Calu3 (cell line): ENCODE measurements at regions of chr20 and their contacts with region 1.

Region 1: GRCh38 chr20:58017237-58017969 is 211.1 kb downstream of the ANKRD60 start:
- DNase-seq: peak; percentile 99
- H3K4me3 Mint-ChIP-seq: peak overlapping the region; percentile 12
- H3K27ac Mint-ChIP-seq: peak overlapping the region; percentile 94
- H3K4me1 Mint-ChIP-seq: peaks cover 75% of the 10 kb centered on the region
- H3K27me3 Mint-ChIP-seq: no peaks in the 10 kb centered on the region
- CTCF ChIP-seq: no peak

Region 2: GRCh38 chr20:57622579-57623377 is 394.6 kb before region 1 on chr20:
- CTCF ChIA-PET with region 1: interaction called, 4 read pairs
- intact Hi-C with region 1: loop called (anchors 5 kb)
- DNase-seq: peak; percentile 96
- H3K4me3 Mint-ChIP-seq: peak overlapping the region; percentile 11
- H3K27ac Mint-ChIP-seq: peak overlapping the region; percentile 18
- H3K4me1 Mint-ChIP-seq: peaks cover 40% of the 10 kb centered on the region
- H3K27me3 Mint-ChIP-seq: no peaks in the 10 kb centered on the region
- CTCF ChIP-seq: peak; percentile 99

Region 3: DNA sequence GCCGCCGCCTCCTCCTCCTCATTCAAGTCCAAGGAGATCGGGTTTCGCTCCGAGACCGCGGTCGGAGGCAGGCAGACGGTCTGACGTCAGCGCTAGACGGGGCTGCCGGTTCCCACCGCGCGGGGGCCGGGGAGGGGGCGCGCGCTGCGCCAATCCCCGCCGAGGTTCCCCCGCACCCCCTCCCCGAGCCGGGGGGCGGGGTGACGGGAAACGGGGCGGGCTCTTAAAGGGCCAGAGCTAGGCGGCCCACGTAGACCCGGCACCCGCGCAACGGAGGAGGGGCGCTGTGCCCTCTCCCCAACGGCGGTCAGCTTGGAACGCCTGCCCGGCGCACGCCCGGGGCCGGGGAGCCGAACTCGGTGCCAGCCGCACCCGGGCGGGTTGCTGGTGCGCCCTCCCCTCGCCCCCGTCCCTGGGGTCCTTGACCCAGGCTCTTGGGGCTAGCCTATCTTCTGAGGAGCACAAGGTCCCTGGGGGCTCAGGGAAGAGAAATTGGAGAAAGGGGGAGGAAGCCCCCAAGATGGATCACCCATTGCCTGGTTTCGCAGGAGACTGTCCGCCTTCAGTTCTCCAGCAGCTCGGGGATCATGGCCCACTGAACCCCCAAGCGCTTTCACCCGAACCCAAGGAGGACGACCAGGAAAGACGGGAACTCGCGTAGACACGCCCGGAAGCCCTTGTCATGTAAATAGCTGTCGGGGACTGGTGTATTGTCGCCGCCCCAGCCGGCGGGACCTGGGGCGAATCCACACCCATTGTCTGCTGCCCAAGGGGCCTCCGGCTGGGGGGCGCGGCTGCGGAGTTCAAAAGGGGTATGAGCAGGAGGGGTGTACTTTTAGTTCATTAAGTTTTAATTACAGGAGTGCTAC is 307.2 kb before region 1 on chr20 and contains the start of gene PMEPA1:
- CTCF ChIA-PET with region 1: interaction called, 10 read pairs
- intact Hi-C with region 1: loop called (anchors 1 kb)
- DNase-seq: peak; percentile 100
- H3K4me3 Mint-ChIP-seq: peak within 1 kb of the TSS; percentile 88
- H3K27ac Mint-ChIP-seq: peak within 1 kb of the TSS; percentile 97
- H3K4me1 Mint-ChIP-seq: peaks cover 46% of the 10 kb centered on the region
- H3K27me3 Mint-ChIP-seq: no peaks in the 10 kb centered on the region
- CTCF ChIP-seq: no peak
- total RNA-seq, gene PMEPA1: 732 and 1,302 TPM in 2 replicates

Region 4: GRCh38 chr20:57877131-57877824 is 140.1 kb before region 1 on chr20:
- CTCF ChIA-PET with region 1: no interaction called
- intact Hi-C with region 1: no loop called
- DNase-seq: no peak
- H3K4me3 Mint-ChIP-seq: no peak overlapping the region
- H3K27ac Mint-ChIP-seq: no peak overlapping the region
- H3K4me1 Mint-ChIP-seq: no peaks in the 10 kb centered on the region
- H3K27me3 Mint-ChIP-seq: no peaks in the 10 kb centered on the region
- CTCF ChIP-seq: no peak

Region 5: DNA sequence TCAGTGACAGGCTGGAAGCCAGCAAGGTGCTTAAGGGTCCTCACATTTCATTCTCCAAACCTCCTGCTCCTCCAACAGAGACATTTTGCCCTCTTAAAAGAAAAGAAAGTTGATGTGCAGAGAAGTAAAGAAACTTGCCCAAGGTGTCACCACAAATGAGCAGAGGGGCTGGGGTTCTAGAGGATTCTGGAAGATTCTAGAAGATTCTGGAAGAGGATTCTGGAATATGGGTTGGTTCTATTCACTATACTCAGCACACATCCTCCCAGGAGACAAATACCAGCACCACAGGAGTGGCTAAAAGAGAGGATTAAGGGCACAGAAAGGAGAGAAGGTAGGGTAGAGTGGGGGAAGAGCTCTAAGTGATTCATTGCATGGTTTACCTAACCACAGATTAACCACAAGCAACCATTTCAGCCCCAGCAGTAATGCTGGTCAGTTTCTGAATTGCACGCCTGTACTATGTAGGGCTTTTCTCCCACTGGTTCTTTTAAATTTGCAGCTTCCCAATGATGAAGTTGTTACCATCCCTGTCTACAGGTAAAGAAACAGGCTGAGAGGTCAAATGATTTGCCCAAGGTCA is 115.0 kb before region 1 on chr20:
- CTCF ChIA-PET with region 1: interaction called, 7 read pairs
- intact Hi-C with region 1: loop called (anchors 1 kb)
- DNase-seq: peak; percentile 63
- H3K4me3 Mint-ChIP-seq: peak overlapping the region; percentile 11
- H3K27ac Mint-ChIP-seq: peak overlapping the region; percentile 76
- H3K4me1 Mint-ChIP-seq: peaks cover 77% of the 10 kb centered on the region
- H3K27me3 Mint-ChIP-seq: no peaks in the 10 kb centered on the region
- CTCF ChIP-seq: peak; percentile 40

Region 6: DNA sequence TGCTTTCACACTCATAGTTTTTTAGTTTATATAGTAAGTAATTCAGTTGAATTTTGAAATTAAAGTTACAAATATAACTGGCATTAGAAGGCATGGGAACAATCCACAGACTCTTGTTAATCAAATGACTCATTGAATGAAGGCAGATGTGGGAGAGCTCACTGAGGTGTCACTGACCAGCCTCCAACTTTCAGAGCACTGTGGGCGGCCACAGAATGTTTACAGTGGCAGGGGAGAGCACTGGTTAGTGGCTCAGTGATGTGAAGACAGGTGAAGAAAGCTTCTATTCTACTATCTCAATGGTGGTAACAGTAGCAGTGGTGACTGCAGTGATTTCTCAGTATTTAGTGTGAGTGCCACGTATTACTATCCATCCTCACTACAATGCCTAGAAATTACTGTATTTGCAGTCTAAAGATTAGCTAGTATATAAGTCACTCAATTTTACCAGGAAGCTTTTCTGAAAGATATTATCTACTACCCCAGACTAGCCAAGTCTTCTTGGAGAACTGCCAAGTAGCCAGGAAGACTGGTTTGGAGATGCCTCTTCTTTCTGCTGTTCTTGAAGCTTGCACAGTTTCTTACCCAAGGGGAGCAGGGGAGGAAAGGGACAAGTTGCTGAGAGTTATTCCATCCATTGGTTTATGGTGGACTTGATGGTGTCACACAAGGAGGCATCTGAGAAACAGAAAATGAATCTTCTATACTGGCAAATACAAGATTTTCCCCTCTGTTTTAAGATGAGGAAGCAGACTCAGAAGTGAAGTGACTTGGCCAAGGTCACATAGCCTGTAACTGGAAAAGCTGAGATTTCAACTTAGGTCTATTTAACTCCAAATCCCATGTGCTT is 20.2 kb before region 1 on chr20:
- CTCF ChIA-PET with region 1: no interaction called
- intact Hi-C with region 1: no loop called
- DNase-seq: peak; percentile 60
- H3K4me3 Mint-ChIP-seq: peak overlapping the region; percentile 1
- H3K27ac Mint-ChIP-seq: peak overlapping the region; percentile 57
- H3K4me1 Mint-ChIP-seq: peaks cover 55% of the 10 kb centered on the region
- H3K27me3 Mint-ChIP-seq: no peaks in the 10 kb centered on the region
- CTCF ChIP-seq: no peak

Region 7: DNA sequence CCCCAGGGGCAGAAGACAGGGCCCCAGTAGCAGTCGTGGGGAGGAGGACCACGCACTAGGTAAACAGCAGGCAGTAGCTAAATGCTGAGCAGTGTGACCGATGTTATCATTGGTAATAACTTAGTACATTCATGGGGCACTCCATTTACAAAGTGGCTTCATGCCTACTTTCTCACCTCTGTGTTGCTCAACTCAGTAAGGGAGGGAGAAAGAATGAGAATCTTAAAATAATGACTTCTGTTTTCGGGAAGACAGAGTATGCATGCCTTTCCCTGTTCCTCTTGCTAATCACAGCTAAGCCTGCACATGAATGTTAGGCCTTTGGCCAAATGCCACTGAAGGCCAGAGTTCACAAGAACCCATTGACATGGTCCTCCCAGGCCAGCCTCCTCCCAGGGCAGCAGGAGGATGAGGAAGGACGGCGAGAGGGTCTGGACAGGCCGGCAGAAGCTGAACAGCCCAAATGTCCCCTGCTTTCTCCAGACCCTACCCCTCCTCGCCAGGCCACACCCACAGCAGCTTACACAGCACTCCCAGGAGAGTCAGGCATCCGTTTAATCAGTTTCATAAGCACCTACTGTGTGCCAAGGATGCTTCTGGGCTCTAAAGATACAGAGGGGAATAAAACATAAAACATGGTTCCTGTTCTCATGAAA is 27.7 kb after region 1 on chr20:
- CTCF ChIA-PET with region 1: no interaction called
- intact Hi-C with region 1: no loop called
- DNase-seq: no peak
- H3K4me3 Mint-ChIP-seq: no peak overlapping the region
- H3K27ac Mint-ChIP-seq: no peak overlapping the region
- H3K4me1 Mint-ChIP-seq: peaks cover 6% of the 10 kb centered on the region
- H3K27me3 Mint-ChIP-seq: no peaks in the 10 kb centered on the region
- CTCF ChIP-seq: no peak

Region 8: DNA sequence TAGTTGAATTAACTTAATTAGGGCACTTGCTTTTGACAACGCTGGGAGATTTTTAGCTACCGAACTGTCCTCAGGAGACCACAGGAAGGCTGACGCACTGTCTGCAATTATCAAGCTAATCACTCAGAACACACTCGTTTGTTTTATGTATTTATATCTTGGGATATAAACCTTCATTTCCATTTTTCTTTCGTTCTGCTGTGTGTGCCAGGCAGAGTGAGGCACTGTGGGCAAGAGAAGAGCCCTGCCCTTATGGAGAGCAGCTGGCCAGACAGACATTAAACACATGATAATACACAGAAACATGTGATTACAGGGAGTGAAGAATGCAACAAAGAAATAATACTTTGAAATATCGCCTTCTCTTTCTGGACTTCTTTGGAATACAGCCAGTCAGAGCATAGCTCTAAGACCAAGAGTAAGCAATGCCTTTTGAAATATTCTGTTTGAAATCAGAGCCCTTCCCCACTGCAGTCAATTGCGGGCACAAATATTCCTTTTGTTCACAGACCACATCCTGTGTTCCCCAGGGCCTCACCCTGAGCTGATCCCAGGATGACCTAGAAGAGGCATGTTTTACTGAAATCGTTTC is 114.2 kb after region 1 on chr20:
- CTCF ChIA-PET with region 1: interaction called, 5 read pairs
- intact Hi-C with region 1: loop called (anchors 2 kb)
- DNase-seq: peak; percentile 86
- H3K4me3 Mint-ChIP-seq: peak overlapping the region; percentile 63
- H3K27ac Mint-ChIP-seq: peak overlapping the region; percentile 99
- H3K4me1 Mint-ChIP-seq: peaks cover 89% of the 10 kb centered on the region
- H3K27me3 Mint-ChIP-seq: no peaks in the 10 kb centered on the region
- CTCF ChIP-seq: no peak